Sciatic nerve (tissue), 2 donors: ENCODE measurements at regions of chr2 and their contacts with region 1.

Region 1: DNA sequence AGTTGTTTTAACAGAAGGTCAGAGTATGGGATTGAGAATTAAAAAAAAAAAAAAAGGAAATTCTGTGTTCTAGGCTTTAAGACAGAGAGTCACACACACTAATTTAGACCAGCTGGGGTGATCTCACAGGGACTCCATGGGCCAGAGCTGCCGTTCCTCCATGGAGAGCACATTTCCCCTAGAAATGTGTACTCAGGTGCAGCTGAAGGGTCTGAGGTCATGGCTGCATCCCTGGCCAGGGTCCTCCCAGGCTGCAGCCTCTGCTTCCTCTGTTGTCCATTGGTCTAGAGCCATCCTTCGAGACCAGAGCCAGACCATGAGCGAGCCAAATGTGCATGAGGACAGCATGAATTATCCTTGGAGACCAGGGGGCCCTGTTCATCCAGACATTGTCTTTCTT is 190.1 kb upstream of the TNP1 start:
- DNase-seq: peak; percentile 78
- ATAC-seq: peak; percentile 93

Region 2: DNA sequence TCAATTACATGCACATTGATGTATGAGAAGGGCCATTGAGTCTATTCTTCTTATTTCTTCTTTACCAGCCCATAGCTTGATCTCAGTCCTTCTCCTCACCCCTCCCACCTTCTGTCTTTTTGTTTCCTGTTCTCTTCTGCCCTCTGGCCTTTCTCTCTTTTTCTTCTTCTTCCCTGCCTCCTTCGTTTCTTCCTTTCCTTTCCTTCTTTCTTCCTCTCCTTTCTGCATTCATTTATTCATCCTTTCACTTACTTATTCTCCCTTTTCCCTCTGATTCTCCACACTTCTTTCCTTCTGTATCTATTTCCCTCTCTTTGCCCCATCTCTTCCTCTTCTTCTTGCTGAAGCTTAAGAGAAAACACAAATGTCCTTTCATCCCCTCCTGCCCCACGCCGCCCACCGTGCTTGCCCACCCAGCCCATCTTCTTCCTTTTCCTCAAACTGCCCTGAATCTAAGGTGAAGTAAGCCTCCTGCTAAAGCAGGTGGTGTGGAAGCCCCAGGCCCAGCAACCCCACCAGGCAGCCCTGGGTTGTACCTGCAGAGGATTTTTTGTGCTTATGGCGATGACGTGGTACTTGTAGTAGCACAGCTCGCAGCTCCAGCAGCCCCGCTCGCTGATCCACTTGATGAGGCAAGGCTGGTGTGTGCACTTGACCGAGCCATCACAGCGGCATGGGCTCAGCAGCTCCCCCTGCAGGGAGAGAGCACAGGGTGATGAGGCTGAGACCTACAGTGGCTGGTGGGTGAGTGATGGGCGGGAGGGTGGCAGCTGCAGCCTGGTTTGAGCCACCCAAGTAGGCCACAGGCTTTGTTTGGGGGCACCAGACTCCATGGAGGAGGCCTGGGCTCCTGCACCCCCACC is 766.7 kb before region 1 on chr2:
- intact Hi-C with region 1: loop called (anchors 10 kb)
- DNase-seq: no peak
- ATAC-seq: no peak

Region 3: GRCh38 chr2:216991563-216991962 is 58.4 kb before region 1 on chr2:
- intact Hi-C with region 1: no loop called
- DNase-seq: peak; percentile 69
- ATAC-seq: peak; percentile 0